A673 (cell line): ENCODE measurements at regions of chr4 and their contacts with region 1.

Region 1: DNA sequence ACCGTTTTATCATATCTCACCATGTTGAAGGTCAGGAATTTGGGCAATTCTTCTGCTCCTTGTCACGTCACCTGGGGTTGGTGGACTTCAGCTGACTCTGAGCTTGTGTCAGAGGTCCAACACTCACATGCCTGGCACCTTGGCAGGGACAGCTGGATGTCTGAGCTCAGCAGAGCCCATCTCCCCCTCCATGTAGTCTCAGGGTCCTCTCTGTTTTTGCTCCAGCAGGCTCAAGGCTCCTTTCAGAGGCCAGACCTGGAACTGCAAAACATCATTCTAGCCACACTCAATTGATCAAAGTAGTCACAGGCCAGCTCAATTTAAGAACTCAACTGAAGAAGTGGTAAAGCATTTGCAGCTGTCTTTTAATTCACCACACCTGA is 45.4 kb downstream of the EDNRA start:
- DNase-seq: peak; percentile 47
- H3K4me3 ChIP-seq: no peak overlapping the region
- H3K27ac ChIP-seq: no peak overlapping the region
- H3K4me1 ChIP-seq: peaks cover 31% of the 10 kb centered on the region
- H3K27me3 ChIP-seq: no peaks in the 10 kb centered on the region
- CTCF ChIP-seq: peak; percentile 49

Region 2: DNA sequence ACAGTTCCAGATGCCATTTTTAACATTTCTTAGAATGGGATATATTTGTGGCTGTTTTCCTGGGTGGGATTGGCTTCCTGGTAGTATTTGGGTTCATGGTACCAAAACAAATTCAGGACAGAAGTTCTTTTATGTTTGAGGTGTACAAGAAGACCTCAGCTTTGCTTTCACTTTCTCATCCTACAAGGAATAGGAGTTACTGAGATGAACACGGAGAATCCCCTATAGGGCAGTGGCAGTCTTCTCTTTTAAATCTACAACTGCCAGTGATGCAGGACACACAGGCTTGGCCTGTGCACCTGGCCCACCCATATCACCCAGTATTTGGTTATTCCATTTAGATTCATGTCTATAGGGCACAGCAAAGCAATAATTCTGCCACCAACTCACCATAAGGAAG is 1039.7 kb before region 1 on chr4:
- CTCF ChIA-PET with region 1: no interaction called
- POLR2A ChIA-PET with region 1: no interaction called
- intact Hi-C with region 1: no loop called
- DNase-seq: no peak
- H3K4me3 ChIP-seq: no peak overlapping the region
- H3K27ac ChIP-seq: peak overlapping the region; percentile 98
- H3K4me1 ChIP-seq: peaks cover 58% of the 10 kb centered on the region
- H3K27me3 ChIP-seq: no peaks in the 10 kb centered on the region
- CTCF ChIP-seq: no peak

Region 3: DNA sequence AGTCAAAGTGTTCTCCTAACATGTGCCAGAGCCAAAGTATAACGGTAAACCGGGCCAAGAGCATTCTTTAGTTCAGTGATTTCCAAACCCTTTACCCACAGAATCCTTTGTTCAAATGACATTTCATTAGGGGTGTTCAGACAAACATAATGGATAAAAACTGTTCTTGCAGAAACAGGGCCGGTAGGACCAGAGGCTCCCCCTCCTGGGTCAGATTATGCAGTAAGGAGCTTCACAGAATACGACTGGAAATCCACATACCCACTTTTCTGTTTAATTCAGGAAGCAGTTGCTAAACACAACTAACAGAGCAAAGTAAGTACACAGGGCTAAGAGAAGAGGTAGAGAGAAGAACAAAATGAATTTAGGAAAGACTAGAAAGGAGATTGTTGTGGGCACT is 44.4 kb after region 1 on chr4:
- CTCF ChIA-PET with region 1: interaction called, 11 read pairs
- POLR2A ChIA-PET with region 1: no interaction called
- intact Hi-C with region 1: no loop called
- DNase-seq: no peak
- H3K4me3 ChIP-seq: no peak overlapping the region
- H3K27ac ChIP-seq: no peak overlapping the region
- H3K4me1 ChIP-seq: no peaks in the 10 kb centered on the region
- H3K27me3 ChIP-seq: no peaks in the 10 kb centered on the region
- CTCF ChIP-seq: peak; percentile 22; the same call in 1 of the 2 replicates